Activated CD4-positive, alpha-beta T cell treated with anti-CD3 and anti-CD28 coated beads for 36 hours (primary cell): ENCODE measurements at regions of chr1 and their contacts with region 1.

Region 1: DNA sequence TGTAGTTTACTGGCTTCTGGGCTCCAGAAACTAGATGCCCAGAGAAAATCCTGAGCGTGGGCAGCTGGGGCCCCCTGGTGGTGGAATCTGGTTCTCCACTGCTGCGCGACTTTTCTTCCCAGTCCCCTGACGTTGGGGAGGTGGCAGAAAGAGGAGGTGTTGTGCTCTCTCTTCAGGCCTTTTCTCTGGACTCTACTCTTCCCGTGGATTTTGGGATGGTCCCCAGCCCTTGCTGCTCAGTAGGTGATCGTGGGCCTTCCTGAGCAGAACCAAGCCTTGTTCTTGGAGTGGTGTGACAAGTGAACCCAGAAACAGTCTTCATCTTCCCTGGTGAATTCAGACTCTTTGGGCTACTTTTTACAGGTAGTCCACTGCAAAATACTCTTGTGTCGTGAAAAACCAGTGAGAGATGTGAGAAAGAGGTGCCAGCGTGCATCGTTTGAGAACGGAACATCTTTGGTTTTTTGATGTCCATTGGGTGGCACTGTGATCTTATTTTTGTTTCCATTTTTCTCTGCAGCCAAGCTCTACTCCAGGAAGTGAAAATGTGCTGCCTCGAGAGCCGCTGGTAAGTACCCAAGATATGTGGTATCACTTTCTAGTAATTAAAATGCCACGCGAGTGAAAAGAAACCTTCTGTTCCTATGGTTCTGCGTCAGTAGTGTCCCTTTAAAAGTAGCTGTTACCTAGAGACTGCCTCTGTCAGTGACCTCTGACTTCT is 20.2 kb downstream of the PEX14 start:
- DNase-seq: peak; percentile 90
- ATAC-seq: peak; percentile 87
- H3K4me3 Mint-ChIP-seq: peak overlapping the region; percentile 72
- H3K27ac Mint-ChIP-seq: peak overlapping the region; percentile 91
- H3K4me1 Mint-ChIP-seq: peaks cover 49% of the 10 kb centered on the region
- H3K27me3 Mint-ChIP-seq: no peaks in the 10 kb centered on the region

Region 2: DNA sequence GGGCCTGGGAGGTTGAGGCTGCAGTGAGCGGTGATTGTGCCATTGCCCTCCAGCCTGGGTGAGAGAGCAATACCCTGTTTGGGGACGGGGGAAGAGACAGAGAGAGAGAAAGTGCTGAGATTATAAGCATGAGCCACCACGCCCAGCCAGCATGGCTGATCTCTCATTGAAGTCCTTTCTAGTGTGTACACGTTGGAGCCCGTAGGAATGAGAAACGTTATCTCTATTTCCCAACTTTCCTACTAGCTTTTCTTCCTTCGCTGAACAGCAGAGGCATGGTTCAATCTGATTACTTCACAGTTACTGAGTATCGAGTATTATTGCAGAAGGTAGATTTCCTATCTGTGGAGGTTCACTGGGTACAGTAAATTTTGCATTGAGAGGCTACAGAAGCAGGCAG is 15.6 kb before region 1 on chr1:
- CTCF ChIA-PET with region 1: interaction called, 26 read pairs
- POLR2A ChIA-PET with region 1: no interaction called
- intact Hi-C with region 1: loop called (anchors 1 to 2 kb)
- DNase-seq: no peak
- ATAC-seq: no peak
- H3K4me3 Mint-ChIP-seq: no peak overlapping the region
- H3K27ac Mint-ChIP-seq: no peak overlapping the region
- H3K4me1 Mint-ChIP-seq: peaks cover 25% of the 10 kb centered on the region
- H3K27me3 Mint-ChIP-seq: no peaks in the 10 kb centered on the region

Region 3: GRCh38 chr1:10522322-10522860 is 27.5 kb after region 1 on chr1:
- CTCF ChIA-PET with region 1: interaction called, 18 read pairs
- POLR2A ChIA-PET with region 1: no interaction called
- intact Hi-C with region 1: no loop called
- DNase-seq: no peak
- ATAC-seq: no peak
- H3K4me3 Mint-ChIP-seq: no peak overlapping the region
- H3K27ac Mint-ChIP-seq: peak overlapping the region; percentile 39
- H3K4me1 Mint-ChIP-seq: peaks cover 35% of the 10 kb centered on the region
- H3K27me3 Mint-ChIP-seq: no peaks in the 10 kb centered on the region

Region 4: DNA sequence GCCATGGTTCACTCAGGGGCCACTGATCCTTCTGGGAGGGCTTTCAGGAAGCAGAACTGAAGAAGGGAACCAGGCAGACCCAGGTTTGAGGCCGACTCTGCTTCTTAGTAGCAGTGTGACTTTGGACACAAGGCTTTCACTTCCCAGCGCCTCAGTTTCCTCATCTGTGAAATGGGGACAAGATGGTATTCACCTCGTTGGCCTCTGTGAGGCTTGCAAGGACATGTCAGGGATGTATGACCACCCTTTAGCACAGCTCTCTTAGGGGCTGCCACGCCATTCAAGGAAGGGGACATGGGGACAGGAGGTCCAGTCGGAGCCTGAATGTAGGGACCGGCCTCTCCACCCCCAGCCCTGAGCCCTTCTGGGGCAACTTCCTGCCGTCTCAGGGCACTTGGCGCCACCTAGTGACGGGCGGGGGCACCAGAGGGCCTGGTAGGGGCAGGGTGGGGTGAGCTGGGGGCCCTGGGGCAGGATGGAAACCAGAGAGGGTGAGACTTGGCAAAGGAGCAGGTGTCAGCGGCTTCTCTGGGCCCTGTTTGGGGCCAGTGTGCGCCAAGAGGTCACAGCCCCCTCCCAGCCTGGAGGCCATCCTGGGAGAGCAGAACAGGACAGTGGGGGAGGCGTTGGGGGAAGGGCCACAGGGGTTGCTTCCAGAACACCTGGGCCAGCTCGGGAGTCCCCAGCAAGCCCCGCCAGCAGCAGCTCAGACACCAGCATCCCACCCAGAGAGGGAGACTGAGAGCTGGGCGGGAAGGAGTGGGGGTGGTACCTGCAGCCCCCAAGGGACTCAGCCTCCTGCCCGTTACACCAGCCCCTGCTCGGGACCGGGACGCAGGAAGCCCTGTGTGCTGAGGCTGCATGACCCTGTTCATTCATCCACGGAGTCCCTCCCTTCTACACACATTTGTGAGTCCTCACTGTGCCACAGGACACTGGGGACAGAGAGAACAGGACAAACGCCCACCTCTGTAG is 415.1 kb after region 1 on chr1:
- CTCF ChIA-PET with region 1: interaction called, 4 read pairs
- POLR2A ChIA-PET with region 1: no interaction called
- intact Hi-C with region 1: loop called in 1 of 2 experiments (anchors 1 kb)
- DNase-seq: peak; percentile 86
- ATAC-seq: peak; percentile 83
- H3K4me3 Mint-ChIP-seq: no peak overlapping the region
- H3K27ac Mint-ChIP-seq: no peak overlapping the region
- H3K4me1 Mint-ChIP-seq: peaks cover 4% of the 10 kb centered on the region
- H3K27me3 Mint-ChIP-seq: peaks cover 7% of the 10 kb centered on the region

Region 5: GRCh38 chr1:11012250-11013171 is 517.6 kb after region 1 on chr1 and contains the start of gene TARDBP:
- CTCF ChIA-PET with region 1: no interaction called
- POLR2A ChIA-PET with region 1: no interaction called
- intact Hi-C with region 1: loop called in 1 of 2 experiments (anchors 5 kb)
- DNase-seq: peak; percentile 94
- ATAC-seq: peak; percentile 89
- H3K4me3 Mint-ChIP-seq: peak within 1 kb of the TSS; percentile 93
- H3K27ac Mint-ChIP-seq: peak within 1 kb of the TSS; percentile 99
- H3K4me1 Mint-ChIP-seq: peaks cover 30% of the 10 kb centered on the region
- H3K27me3 Mint-ChIP-seq: no peaks in the 10 kb centered on the region
- total RNA-seq, gene TARDBP: 180 to 190 TPM